K562 (cell line): ENCODE measurements at regions of chr12 and their contacts with region 1.

Region 1: GRCh38 chr12:112409064-112409905 is at the start of gene RPL6:
- DNase-seq: peak; percentile 78 to 95 (median 84)
- ATAC-seq: peak; percentile 90
- H3K4me3 ChIP-seq: peak within 1 kb of the TSS; percentile 90
- H3K27ac ChIP-seq: peak within 1 kb of the TSS; percentile 96
- H3K4me1 ChIP-seq: peaks cover 7 to 16% of the 10 kb centered on the region in 2 experiments; a peak in 4 of 5 replicates
- H3K27me3 ChIP-seq: no peaks in the 10 kb centered on the region
- CTCF ChIP-seq: no peak
- EP300 ChIP-seq: peak; percentile 17; the same call in 1 of the 2 replicates
- POLR2A ChIP-seq: peak; percentile 99
- RAD21 ChIP-seq: no peak
- polyA plus RNA-seq, gene RPL6: 1,519 to 1,617 TPM

Region 2: GRCh38 chr12:111841750-111842555 is 567.3 kb before region 1 on chr12 and contains the start of gene MAPKAPK5:
- CTCF ChIA-PET with region 1: no interaction called
- POLR2A ChIA-PET with region 1: no interaction called
- in situ Hi-C with region 1: no loop called
- intact Hi-C with region 1: loop called (anchors 10 kb)
- DNase-seq: peak; percentile 95 to 99 (median 97)
- ATAC-seq: peak; percentile 80
- H3K4me3 ChIP-seq: peak within 1 kb of the TSS; percentile 85
- H3K27ac ChIP-seq: peak within 1 kb of the TSS; percentile 98
- H3K4me1 ChIP-seq: peaks cover 23 to 36% of the 10 kb centered on the region in 2 experiments; a peak in 4 of 5 replicates
- H3K27me3 ChIP-seq: no peaks in the 10 kb centered on the region
- CTCF ChIP-seq: no peak
- EP300 ChIP-seq: peak; percentile 43; the same call in 1 of the 2 replicates
- POLR2A ChIP-seq: peak; percentile 83
- RAD21 ChIP-seq: no peak
- polyA plus RNA-seq, gene MAPKAPK5: 11.6 to 17.7 TPM

Region 3: DNA sequence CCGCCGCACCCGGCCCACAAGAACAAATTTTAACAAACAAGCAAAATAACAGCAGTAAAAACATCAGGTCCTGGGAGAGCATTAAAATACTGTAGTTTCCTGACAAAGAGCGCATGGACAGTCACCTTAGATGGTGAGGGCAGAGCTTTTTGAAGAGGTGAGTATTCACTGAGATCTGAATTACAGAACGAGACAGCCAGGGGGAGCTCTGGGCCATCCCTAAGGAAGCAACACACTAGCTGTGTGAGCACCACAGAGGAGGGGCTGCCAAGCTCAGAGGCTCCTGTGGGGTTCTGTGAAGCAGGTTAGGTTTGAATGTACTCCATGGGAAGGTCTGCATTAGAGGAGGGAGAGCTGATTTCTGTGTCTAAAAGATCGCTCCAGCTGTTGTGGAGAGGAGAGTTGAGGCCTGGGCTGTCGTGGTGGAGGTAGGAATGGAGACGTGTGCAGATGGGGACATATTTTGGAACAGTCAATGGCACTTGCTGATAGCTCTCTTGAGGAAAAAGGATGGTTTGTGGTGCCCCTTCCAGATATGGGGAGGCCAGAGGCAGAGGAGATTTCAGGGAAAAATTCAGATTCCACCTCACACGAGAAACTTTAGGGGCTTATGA is 211.1 kb before region 1 on chr12:
- CTCF ChIA-PET with region 1: interaction called, 4 read pairs
- POLR2A ChIA-PET with region 1: interaction called, 6 read pairs
- in situ Hi-C with region 1: no loop called
- intact Hi-C with region 1: loop called (anchors 1 kb)
- DNase-seq: peak; percentile 31 to 77 (median 58)
- ATAC-seq: peak; percentile 100
- H3K4me3 ChIP-seq: no peak overlapping the region
- H3K27ac ChIP-seq: no peak overlapping the region
- H3K4me1 ChIP-seq: peaks cover 0 to 3% of the 10 kb centered on the region in 2 experiments; a peak in 2 of 5 replicates
- H3K27me3 ChIP-seq: no peaks in the 10 kb centered on the region
- CTCF ChIP-seq: peak; percentile 72 to 84 (median 81)
- EP300 ChIP-seq: no peak
- POLR2A ChIP-seq: no peak
- RAD21 ChIP-seq: peak; percentile 54 to 80

Region 4: GRCh38 chr12:112393328-112393727 is 16.0 kb before region 1 on chr12:
- CTCF ChIA-PET with region 1: no interaction called
- POLR2A ChIA-PET with region 1: interaction called, 13 read pairs
- in situ Hi-C with region 1: no loop called
- intact Hi-C with region 1: no loop called
- DNase-seq: no peak
- ATAC-seq: no peak
- H3K4me3 ChIP-seq: no peak overlapping the region
- H3K27ac ChIP-seq: no peak overlapping the region
- H3K4me1 ChIP-seq: no peaks in the 10 kb centered on the region; a peak in 1 of 5 replicates
- H3K27me3 ChIP-seq: no peaks in the 10 kb centered on the region
- CTCF ChIP-seq: no peak
- EP300 ChIP-seq: no peak
- POLR2A ChIP-seq: no peak
- RAD21 ChIP-seq: no peak

Region 5: DNA sequence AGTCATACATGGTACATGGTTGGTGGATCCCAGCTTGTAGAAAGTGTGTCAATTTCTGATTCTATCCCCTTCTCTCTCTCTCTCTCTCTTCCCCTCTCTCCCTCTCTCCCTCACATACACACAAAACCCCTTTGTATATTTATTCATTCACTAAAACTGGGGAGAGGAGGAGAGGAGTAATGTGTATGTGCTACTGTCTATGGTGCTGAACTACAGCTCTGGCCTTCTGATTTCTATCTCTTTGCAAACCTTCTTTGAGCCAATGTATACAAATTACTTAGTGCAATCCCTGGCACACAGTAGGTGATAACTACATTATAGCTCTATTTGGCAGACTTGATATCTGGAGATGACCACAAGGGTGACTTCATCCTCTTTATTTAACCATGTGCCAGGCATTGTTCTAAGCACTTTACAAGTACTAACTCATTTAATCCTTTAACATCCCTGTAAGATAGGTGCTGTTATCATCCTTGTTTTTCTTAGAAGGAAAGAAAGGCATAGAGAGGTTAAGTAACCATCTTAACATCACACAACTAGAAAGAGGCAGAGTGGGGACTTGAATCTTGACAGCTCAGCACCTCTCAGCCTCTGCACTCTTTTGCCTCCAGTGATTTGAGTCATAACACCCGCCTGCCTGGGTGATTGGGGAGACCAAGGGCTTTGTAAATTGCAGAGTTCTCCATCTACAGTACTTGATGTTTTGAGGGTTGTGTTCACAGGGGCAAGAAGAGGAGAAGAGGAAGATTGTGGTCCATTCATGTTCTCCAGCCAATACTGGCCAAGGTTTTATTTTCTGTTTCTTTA is 403.5 kb after region 1 on chr12:
- CTCF ChIA-PET with region 1: no interaction called
- POLR2A ChIA-PET with region 1: no interaction called
- in situ Hi-C with region 1: no loop called
- intact Hi-C with region 1: no loop called
- DNase-seq: no peak
- ATAC-seq: no peak
- H3K4me3 ChIP-seq: no peak overlapping the region
- H3K27ac ChIP-seq: no peak overlapping the region
- H3K4me1 ChIP-seq: no peaks in the 10 kb centered on the region; a peak in 1 of 5 replicates
- H3K27me3 ChIP-seq: peaks cover 0 to 4% of the 10 kb centered on the region in 2 experiments; a peak in 1 of 5 replicates
- CTCF ChIP-seq: no peak
- EP300 ChIP-seq: no peak
- POLR2A ChIP-seq: no peak
- RAD21 ChIP-seq: no peak